ENCODE measurements at regions of chr6 and their contacts with region 1.

Region 1: DNA sequence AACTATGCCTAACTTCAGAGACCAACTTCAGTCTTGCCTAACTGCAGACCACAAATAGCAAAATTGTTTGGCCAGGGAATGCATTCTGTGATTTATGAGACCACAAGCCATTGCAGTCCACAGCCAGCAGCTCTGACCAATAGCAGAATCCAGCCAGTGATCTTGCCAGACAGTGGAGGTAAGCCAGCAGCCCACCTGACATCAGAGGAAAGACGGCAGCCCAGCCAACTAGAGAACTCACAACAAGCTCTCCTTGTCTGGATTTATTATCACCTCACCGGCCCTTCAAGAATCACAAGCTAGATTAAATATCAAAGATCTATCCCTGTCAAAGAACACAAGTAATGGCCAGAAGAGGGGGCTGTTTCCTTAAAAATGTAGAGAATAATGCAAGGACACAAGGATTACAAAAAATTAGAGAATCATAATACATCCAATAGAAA is 66.5 kb upstream of the SLC35F1 start:
- DNase-seq: peak; percentile 82
- H3K4me3 Mint-ChIP-seq: no peak overlapping the region
- H3K27ac Mint-ChIP-seq: no peak overlapping the region
- H3K4me1 Mint-ChIP-seq: no peaks in the 10 kb centered on the region
- H3K27me3 Mint-ChIP-seq: peaks cover 73% of the 10 kb centered on the region
- CTCF ChIP-seq: peak; percentile 37

Region 2: GRCh38 chr6:116954938-116955337 is 885.6 kb before region 1 on chr6:
- CTCF ChIA-PET with region 1: no interaction called
- POLR2A ChIA-PET with region 1: no interaction called
- intact Hi-C with region 1: no loop called
- DNase-seq: no peak
- H3K4me3 Mint-ChIP-seq: no peak overlapping the region
- H3K27ac Mint-ChIP-seq: no peak overlapping the region
- H3K4me1 Mint-ChIP-seq: no peaks in the 10 kb centered on the region
- H3K27me3 Mint-ChIP-seq: peaks cover 74% of the 10 kb centered on the region
- CTCF ChIP-seq: no peak

Region 3: DNA sequence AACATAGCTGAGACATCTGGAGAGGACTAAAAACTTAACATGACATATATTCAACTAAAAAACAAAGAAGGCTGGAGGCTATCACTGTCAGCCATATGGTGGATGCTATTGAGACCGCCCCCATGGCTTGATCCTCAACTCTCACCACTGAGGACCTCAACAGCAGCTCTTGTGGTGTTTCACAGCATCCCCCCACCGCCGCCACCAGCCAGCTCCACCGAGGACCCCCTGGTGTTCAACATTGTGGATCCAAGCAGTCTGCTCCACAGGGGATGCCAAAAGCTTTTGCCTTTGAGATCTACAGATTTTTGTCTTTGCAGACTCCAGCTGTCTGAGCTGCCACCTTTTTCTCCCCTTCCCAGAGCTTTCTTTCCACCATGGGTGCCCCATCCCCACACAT is 100.7 kb before region 1 on chr6:
- CTCF ChIA-PET with region 1: no interaction called
- POLR2A ChIA-PET with region 1: no interaction called
- intact Hi-C with region 1: no loop called
- DNase-seq: no peak
- H3K4me3 Mint-ChIP-seq: no peak overlapping the region
- H3K27ac Mint-ChIP-seq: no peak overlapping the region
- H3K4me1 Mint-ChIP-seq: no peaks in the 10 kb centered on the region
- H3K27me3 Mint-ChIP-seq: peaks cover 11% of the 10 kb centered on the region
- CTCF ChIP-seq: no peak

Region 4: GRCh38 chr6:117976030-117976651 is 135.6 kb after region 1 on chr6:
- CTCF ChIA-PET with region 1: interaction called, 4 read pairs
- POLR2A ChIA-PET with region 1: no interaction called
- intact Hi-C with region 1: loop called (anchors 5 kb)
- DNase-seq: peak; percentile 65
- H3K4me3 Mint-ChIP-seq: no peak overlapping the region
- H3K27ac Mint-ChIP-seq: no peak overlapping the region
- H3K4me1 Mint-ChIP-seq: no peaks in the 10 kb centered on the region
- H3K27me3 Mint-ChIP-seq: peaks cover 26% of the 10 kb centered on the region
- CTCF ChIP-seq: peak; percentile 40

Region 5: GRCh38 chr6:118509009-118509617 is 668.6 kb after region 1 on chr6:
- CTCF ChIA-PET with region 1: interaction called, 4 read pairs
- POLR2A ChIA-PET with region 1: no interaction called
- intact Hi-C with region 1: loop called (anchors 5 kb)
- DNase-seq: peak; percentile 43
- H3K4me3 Mint-ChIP-seq: no peak overlapping the region
- H3K27ac Mint-ChIP-seq: no peak overlapping the region
- H3K4me1 Mint-ChIP-seq: no peaks in the 10 kb centered on the region
- H3K27me3 Mint-ChIP-seq: no peaks in the 10 kb centered on the region
- CTCF ChIP-seq: peak; percentile 63

Region 6: GRCh38 chr6:118618679-118619377 is 778.3 kb after region 1 on chr6:
- CTCF ChIA-PET with region 1: no interaction called
- POLR2A ChIA-PET with region 1: no interaction called
- intact Hi-C with region 1: loop called (anchors 10 kb)
- DNase-seq: peak; percentile 67
- H3K4me3 Mint-ChIP-seq: no peak overlapping the region
- H3K27ac Mint-ChIP-seq: no peak overlapping the region
- H3K4me1 Mint-ChIP-seq: peaks cover 7% of the 10 kb centered on the region
- H3K27me3 Mint-ChIP-seq: no peaks in the 10 kb centered on the region
- CTCF ChIP-seq: peak; percentile 89

Measured in MCF 10A (cell line).